Transverse colon (tissue), 4 donors: ENCODE measurements at regions of chr9 and their contacts with region 1.

Region 1: DNA sequence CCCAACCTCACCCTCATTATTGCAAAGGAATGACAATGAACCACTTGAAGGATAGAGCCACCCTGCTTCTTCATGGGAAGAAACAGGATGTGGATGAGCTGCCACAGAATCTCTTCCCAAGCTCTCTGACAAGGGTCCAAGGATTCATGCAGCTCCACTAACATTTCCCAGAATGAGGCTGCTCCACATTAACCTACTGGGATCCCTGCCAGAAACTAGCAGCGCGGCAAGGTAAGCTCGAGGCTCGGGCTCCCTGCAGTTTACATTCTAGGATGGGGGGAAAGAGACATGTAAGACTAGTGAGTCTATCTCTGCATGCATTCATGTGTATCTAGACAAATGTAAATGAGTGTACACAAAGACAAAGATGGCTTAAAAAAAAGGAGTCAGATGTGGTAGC is 12.1 kb downstream of the DCAF12 start:
- DNase-seq: no peak
- H3K4me3 ChIP-seq: no peak overlapping the region
- H3K27ac ChIP-seq: no peak overlapping the region
- H3K4me1 ChIP-seq: no peaks in the 10 kb centered on the region
- H3K27me3 ChIP-seq: no peaks in the 10 kb centered on the region
- CTCF ChIP-seq: no peak
- EP300 ChIP-seq: no peak
- POLR2A ChIP-seq: no peak

Region 2: GRCh38 chr9:34048923-34049697 is 65.3 kb before region 1 on chr9:
- in situ Hi-C with region 1: no loop called
- intact Hi-C with region 1: no loop called
- DNase-seq: peak; percentile 98
- H3K4me3 ChIP-seq: peak overlapping the region; percentile 66 to 89 (median 75)
- H3K27ac ChIP-seq: peak overlapping the region; percentile 92 to 96 (median 96)
- H3K4me1 ChIP-seq: peaks cover 9 to 31% (median 27%) of the 10 kb centered on the region in 4 donors
- H3K27me3 ChIP-seq: no peaks in the 10 kb centered on the region
- CTCF ChIP-seq: peak in 1 of 5 experiments; percentile 30
- EP300 ChIP-seq: no peak
- POLR2A ChIP-seq: no peak

Region 3: GRCh38 chr9:34086864-34087263 is 27.6 kb before region 1 on chr9:
- in situ Hi-C with region 1: no loop called
- intact Hi-C with region 1: loop called (anchors 1 kb)
- DNase-seq: no peak
- H3K4me3 ChIP-seq: no peak overlapping the region
- H3K27ac ChIP-seq: peak overlapping the region in 1 of 4 donors; percentile 30
- H3K4me1 ChIP-seq: peaks cover 0 to 8% (median 2%) of the 10 kb centered on the region in 4 donors
- H3K27me3 ChIP-seq: no peaks in the 10 kb centered on the region
- CTCF ChIP-seq: no peak
- EP300 ChIP-seq: no peak
- POLR2A ChIP-seq: no peak